Posterior vena cava (tissue), 2 donors: ENCODE measurements at regions of chr2 and their contacts with region 1.

Region 1: DNA sequence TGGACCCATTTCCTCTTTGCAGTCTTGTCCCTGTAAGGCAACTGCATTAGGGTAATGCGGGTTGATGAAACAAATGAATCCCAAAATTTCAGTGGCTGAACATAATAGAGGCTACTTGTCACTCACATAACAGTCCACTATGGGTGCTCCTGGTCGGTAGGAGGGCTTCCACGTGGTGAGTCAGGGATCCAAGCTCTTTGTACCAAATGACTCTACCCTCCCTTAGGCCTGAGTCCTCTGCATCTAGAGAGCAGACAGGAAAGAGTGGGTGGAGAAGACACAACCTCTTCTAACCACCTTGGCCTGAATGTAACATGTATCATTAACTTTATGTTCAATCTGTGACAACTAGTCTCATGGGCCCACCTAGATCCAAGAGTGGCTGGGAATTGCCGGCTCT is 86.2 kb upstream of the HAAO start:
- DNase-seq: no peak

Region 2: GRCh38 chr2:42810121-42810970 is 68.2 kb before region 1 on chr2:
- intact Hi-C with region 1: no loop called
- DNase-seq: peak; percentile 98

Region 3: GRCh38 chr2:42906557-42907411 is 28.2 kb after region 1 on chr2:
- intact Hi-C with region 1: loop called in 1 of 2 experiments (anchors 5 kb)
- DNase-seq: peak; percentile 91

Region 4: GRCh38 chr2:42922790-42923579 is 44.4 kb after region 1 on chr2:
- intact Hi-C with region 1: loop called in 1 of 2 experiments (anchors 5 kb)
- DNase-seq: no peak

Region 5: DNA sequence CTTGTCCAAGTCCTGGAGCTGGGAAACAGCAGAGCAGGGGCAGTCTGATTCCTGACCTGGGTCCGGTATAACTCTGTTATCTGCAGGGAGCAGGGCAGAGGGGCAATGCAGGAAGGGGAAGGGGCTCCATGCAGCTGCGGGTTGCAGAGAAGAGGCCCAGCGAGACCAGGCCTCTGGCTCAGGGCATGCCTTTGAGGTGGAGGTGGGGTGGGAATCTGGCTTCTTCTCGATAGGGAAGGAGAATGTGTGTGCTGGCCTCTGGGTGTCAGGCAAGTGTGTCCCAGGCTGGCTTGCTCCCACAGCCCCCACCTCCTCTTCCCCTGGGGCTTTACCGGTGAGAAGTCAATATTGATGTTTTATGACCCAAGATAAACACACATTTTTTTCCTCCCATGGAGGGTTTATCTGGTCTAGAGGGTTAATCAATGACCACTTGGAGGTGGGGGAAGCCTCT is 100.9 kb after region 1 on chr2:
- intact Hi-C with region 1: no loop called
- DNase-seq: peak; percentile 29